ENCODE measurements at regions of chr1 and their contacts with region 1.

Region 1: GRCh38 chr1:227728059-227728891 is 6.8 kb downstream of the JMJD4 start:
- DNase-seq: peak; percentile 83
- ATAC-seq: peak; percentile 71

Region 2: GRCh38 chr1:227542143-227543120 is 185.8 kb before region 1 on chr1:
- intact Hi-C with region 1: loop called (anchors 10 kb)
- DNase-seq: peak; percentile 94
- ATAC-seq: peak; percentile 99